ENCODE measurements at regions of chr3 and their contacts with region 1.

Region 1: DNA sequence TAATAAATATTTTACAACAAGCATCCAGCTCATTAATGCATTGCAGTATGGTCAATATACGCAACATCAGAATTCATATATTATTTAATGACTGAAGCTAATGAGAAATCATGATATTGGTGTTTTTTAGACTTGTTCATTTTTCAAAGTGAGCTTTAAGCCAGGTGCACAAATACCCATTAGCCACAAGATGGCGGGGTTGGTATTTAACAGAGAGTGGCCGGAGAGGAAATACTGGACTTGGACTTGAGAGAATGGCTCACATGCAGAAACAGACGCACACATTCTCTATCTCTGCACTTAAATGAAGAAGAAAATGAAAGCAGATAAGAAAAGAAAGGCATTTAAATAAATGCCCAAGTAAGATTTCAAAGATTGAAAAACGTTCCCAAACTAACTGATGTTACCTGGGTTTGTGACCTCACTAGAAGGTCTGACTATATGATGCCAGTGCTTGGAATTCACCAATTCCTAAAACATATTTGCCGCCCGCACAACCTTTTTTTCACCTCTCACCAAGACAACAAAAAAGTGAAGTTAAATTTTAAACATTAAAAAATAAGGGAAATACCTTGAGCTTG is 21.2 kb upstream of the CRBN start:
- DNase-seq: no peak
- H3K4me3 ChIP-seq: no peak overlapping the region
- H3K27ac ChIP-seq: no peak overlapping the region
- H3K4me1 ChIP-seq: no peaks in the 10 kb centered on the region
- H3K27me3 ChIP-seq: no peaks in the 10 kb centered on the region
- CTCF ChIP-seq: peak; percentile 21 to 70 (median 51)
- EP300 ChIP-seq: no peak
- POLR2A ChIP-seq: no peak

Region 2: DNA sequence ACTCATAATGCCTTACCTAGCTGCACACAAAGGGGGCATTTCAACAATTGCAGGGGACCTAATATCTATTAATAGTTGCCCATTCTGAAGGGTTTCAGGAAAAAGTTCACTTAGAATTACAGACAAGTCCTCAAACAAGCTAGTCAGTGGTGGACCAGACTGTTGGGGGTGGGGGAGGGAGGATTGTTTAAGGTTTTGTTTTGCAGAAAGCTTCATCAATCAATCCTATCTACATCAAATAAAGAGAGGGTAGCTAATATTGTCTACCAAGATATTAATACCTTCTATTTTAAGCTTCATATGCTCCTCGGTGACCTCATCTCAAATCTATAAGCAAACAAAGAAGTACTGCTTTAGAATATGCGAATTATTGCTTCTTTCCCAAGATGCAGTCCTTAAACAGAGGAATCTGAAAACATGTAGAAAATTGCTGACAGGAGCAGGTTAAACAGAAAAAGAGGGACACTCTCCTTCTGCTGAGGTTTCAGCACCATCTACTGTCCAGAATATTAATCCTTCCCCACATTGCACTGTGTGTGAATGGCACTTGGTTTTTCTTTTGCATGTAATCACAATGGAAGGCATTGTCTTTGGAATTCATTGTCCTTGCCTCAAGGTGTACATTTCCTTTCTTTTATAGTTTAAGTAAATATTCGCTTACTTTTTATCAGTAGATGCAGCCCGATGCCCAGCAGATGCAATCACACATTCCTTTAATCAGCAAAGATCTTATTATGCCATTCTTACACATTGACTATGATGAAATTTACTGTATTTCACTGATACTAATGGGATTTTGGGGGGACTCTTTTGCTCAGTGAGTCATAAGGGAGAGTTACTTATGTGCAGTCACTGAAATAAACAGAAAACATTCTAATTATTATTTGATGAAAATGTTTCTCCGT is 185.3 kb before region 1 on chr3:
- intact Hi-C with region 1: no loop called
- DNase-seq: no peak
- H3K4me3 ChIP-seq: no peak overlapping the region
- H3K27ac ChIP-seq: no peak overlapping the region
- H3K4me1 ChIP-seq: no peaks in the 10 kb centered on the region
- H3K27me3 ChIP-seq: no peaks in the 10 kb centered on the region
- CTCF ChIP-seq: peak in 2 of 4 experiments; percentile 24 to 36
- EP300 ChIP-seq: no peak
- POLR2A ChIP-seq: no peak

Region 3: DNA sequence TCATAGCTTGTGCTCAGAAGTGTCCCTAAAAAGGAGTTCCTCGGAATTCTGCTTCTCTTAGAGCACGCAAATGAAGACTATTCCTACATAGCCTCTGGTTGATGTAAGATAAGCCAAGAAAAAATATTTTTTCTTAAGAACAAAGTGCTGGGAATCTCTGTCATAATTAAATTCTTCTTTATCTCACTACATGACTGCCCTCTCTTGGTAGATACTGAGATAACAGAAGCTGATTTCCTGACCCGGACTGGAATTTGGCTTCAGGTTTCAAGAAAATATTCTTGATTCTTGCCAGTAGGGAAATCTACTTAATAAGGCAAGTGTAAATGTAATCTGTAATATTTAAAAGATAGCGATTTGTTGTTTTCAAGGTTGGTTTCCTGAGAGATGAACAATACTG is 1071.1 kb after region 1 on chr3:
- intact Hi-C with region 1: loop called (anchors 5 kb)
- DNase-seq: no peak
- H3K4me3 ChIP-seq: no peak overlapping the region
- H3K27ac ChIP-seq: no peak overlapping the region
- H3K4me1 ChIP-seq: no peaks in the 10 kb centered on the region
- H3K27me3 ChIP-seq: no peaks in the 10 kb centered on the region
- CTCF ChIP-seq: peak in 2 of 4 experiments; percentile 24 to 29
- EP300 ChIP-seq: no peak
- POLR2A ChIP-seq: no peak

Region 4: DNA sequence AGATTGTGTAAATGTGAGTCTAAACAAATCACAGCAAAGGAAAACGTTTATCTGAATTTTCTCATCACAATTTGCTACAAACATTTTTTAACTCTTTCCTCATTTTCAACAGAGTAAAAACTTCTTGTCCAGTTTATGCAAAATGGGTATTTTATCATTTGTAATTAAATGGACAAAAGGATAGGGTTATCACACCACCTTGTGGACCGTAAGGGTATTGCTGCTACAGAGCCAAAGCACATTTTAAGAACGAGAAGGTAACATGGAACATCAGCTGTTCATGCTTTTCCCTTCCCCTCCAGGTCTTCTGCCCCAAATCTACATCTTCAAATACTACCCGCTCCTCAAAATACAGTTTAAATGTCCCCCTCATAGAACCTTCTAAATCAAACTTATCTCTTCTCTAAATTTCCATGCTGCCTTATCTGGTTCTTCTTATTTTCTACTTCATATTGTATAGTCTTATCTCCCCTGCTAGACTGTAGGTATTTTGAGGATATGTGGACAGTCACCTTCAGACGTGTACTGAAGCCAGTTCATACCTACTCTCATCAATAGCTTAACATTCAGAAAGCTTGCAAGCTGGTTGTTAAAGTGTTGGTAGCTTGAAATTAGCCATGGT is 1089.7 kb after region 1 on chr3:
- intact Hi-C with region 1: loop called (anchors 2 kb)
- DNase-seq: no peak
- H3K4me3 ChIP-seq: no peak overlapping the region
- H3K27ac ChIP-seq: no peak overlapping the region
- H3K4me1 ChIP-seq: no peaks in the 10 kb centered on the region
- H3K27me3 ChIP-seq: no peaks in the 10 kb centered on the region
- CTCF ChIP-seq: peak; percentile 41 to 96 (median 82)
- EP300 ChIP-seq: no peak
- POLR2A ChIP-seq: no peak

Measured in sigmoid colon (tissue), 7 donors.